GM10248 (cell line): ENCODE measurements at regions of chr13 and their contacts with region 1.

Region 1: GRCh38 chr13:97866346-97866745 is 87.1 kb upstream of the IPO5 start:
- DNase-seq: no peak
- CTCF ChIP-seq: no peak

Region 2: GRCh38 chr13:96762876-96763275 is 1103.5 kb before region 1 on chr13:
- CTCF ChIA-PET with region 1: no interaction called
- POLR2A ChIA-PET with region 1: no interaction called
- DNase-seq: no peak
- CTCF ChIP-seq: no peak

Region 3: GRCh38 chr13:97855570-97856303 is 10.6 kb before region 1 on chr13:
- CTCF ChIA-PET with region 1: interaction called, 16 read pairs
- POLR2A ChIA-PET with region 1: no interaction called
- DNase-seq: peak; percentile 37
- CTCF ChIP-seq: peak; percentile 75